HCT116 (cell line): ENCODE measurements at regions of chr20 and their contacts with region 1.

Region 1: DNA sequence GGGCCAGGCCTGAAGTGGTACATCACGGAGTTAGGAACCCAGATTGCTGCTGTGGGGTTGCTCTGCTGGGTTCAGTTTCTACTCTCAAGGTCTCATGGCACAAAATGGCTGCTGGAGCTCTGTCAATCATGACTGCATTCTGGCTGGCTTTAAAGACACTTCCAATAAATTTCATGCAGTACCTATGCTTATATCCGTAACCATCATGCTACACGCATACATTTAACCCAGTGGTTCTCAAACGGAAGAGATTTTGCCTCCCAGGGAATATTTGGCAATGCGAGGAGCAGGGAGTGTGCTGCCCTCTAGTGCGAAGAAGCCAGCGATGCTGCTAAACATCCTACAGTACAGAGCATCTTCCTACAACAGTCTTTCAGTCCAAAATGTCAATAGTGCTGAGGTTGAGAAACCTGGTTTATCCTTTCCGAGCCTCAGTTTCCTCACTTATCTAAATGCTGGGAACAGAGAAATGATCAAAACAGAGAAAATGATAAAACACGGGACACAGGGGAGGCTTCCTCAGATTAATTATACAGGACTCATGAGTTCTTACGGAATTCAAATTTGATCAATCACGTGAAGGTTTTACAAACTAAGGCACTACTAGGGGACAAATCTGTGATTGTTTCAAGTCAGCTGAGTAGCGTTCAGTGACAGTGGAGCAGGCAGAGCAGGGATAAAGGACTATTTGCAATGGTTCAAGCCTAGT is 9.6 kb upstream of the SLC2A10 start:
- DNase-seq: no peak
- ATAC-seq: peak; percentile 92
- H3K4me3 ChIP-seq: no peak overlapping the region
- H3K27ac ChIP-seq: no peak overlapping the region
- H3K4me1 ChIP-seq: peaks cover 5 to 16% of the 10 kb centered on the region in 2 experiments; a peak in 3 of 4 replicates
- H3K27me3 ChIP-seq: no peaks in the 10 kb centered on the region
- CTCF ChIP-seq: peak; percentile 65 to 92 (median 91); a peak in 5 of 6 replicates
- POLR2A ChIP-seq: no peak
- RAD21 ChIP-seq: peak; percentile 71

Region 2: DNA sequence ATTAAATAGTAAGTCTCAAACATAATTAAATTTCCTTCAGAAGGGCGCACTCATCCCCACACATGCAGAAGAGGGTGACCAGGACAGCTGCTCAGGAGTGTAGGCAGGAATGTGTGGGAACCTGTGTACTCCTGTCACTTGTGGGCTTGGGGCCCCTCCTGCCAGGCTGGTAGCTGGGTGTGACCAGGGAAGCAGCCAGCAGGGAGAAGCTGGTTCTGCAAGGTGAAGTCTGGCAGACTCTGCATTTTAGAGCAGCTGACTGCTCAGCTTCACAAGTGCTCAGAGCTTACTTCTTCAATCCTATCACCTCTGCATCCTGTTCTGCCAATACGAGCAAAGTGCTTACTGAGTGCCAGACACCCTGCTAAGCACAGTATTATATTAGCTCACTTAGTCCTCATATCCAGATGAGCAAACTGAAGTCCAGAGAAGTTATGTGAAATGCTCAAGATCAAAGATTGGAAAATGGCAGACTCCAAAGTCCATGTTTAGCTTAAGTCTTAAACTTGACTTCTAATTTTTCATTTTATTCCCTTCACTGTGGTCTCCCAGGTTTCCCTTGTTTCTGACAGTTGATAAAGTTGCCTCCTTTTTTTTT is 321.3 kb before region 1 on chr20:
- CTCF ChIA-PET with region 1: no interaction called
- POLR2A ChIA-PET with region 1: no interaction called
- RAD21 ChIA-PET with region 1: no interaction called
- intact Hi-C with region 1: no loop called
- DNase-seq: no peak
- ATAC-seq: no peak
- H3K4me3 ChIP-seq: no peak overlapping the region
- H3K27ac ChIP-seq: no peak overlapping the region
- H3K4me1 ChIP-seq: no peaks in the 10 kb centered on the region
- H3K27me3 ChIP-seq: no peaks in the 10 kb centered on the region
- CTCF ChIP-seq: no peak
- POLR2A ChIP-seq: no peak
- RAD21 ChIP-seq: no peak

Region 3: DNA sequence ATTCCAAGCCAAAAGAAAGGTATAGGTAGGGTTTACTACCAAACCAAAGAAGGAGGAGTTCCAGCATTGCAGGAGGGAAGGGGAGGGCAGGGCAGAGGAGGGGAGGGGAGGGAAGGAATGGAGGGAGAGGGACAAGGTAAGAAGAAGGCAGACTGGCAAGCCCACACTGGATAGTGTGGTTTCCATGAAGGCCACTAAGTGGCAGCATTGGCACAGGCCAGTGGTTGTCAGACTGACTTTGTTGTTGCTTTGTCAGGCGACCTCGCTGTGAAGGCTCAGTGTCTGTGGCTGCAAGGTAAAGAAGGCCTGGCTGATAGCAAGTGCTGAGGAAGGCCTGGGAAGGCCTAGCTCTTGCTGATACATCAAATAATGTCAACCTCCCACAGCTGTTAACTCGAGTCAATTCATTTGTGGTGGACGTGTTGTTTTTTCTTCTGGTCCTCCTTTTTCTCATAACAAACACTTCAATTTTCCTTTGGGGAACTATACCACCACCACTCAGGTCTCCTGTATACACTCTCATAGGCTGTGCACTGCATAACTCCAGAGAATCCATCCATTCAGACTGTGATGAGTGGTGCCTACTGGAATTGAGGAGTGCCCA is 178.7 kb before region 1 on chr20:
- CTCF ChIA-PET with region 1: no interaction called
- POLR2A ChIA-PET with region 1: no interaction called
- RAD21 ChIA-PET with region 1: no interaction called
- intact Hi-C with region 1: loop called (anchors 1 kb)
- DNase-seq: peak; percentile 44
- ATAC-seq: peak; percentile 94
- H3K4me3 ChIP-seq: no peak overlapping the region
- H3K27ac ChIP-seq: no peak overlapping the region
- H3K4me1 ChIP-seq: no peaks in the 10 kb centered on the region
- H3K27me3 ChIP-seq: peaks cover 6% of the 10 kb centered on the region
- CTCF ChIP-seq: peak; percentile 40 to 68 (median 64); a peak in 4 of 6 replicates
- POLR2A ChIP-seq: no peak
- RAD21 ChIP-seq: peak; percentile 77